ENCODE measurements at regions of chr11 and their contacts with region 1.

Region 1: GRCh38 chr11:43937434-43938411 is 4.7 kb upstream of the C11orf96 start:
- DNase-seq: no peak

Region 2: GRCh38 chr11:43904742-43905535 is 32.8 kb before region 1 on chr11:
- intact Hi-C with region 1: loop called (anchors 5 kb)
- DNase-seq: peak in 20 of 42 donors; percentile 17 to 81 (median 46)

Measured in head of caudate nucleus (tissue), 42 donors.